ENCODE measurements at regions of chr7 and their contacts with region 1.

Region 1: GRCh38 chr7:30504347-30505173 is at the start of gene GGCT:
- DNase-seq: peak; percentile 90 to 98 (median 96)
- ATAC-seq: peak; percentile 97
- H3K4me3 ChIP-seq: peak within 1 kb of the TSS; percentile 80 to 98
- H3K4me3 Mint-ChIP-seq: peak within 1 kb of the TSS; percentile 95
- H3K27ac ChIP-seq: peak within 1 kb of the TSS; percentile 50 to 70
- H3K27ac Mint-ChIP-seq: peak within 1 kb of the TSS; percentile 94
- H3K4me1 ChIP-seq: peaks cover 23% of the 10 kb centered on the region
- H3K4me1 Mint-ChIP-seq: peaks cover 39% of the 10 kb centered on the region
- H3K27me3 ChIP-seq: no peaks in the 10 kb centered on the region
- H3K27me3 Mint-ChIP-seq: no peaks in the 10 kb centered on the region
- CTCF ChIP-seq: no peak
- total RNA-seq, gene GGCT: 5.9 to 6.1 TPM

Region 2: GRCh38 chr7:30478349-30479201 is 26.0 kb before region 1 on chr7 and contains the start of gene NOD1:
- CTCF ChIA-PET with region 1: interaction called, 10 read pairs
- POLR2A ChIA-PET with region 1: interaction called, 3 read pairs
- intact Hi-C with region 1: loop called (anchors 1 to 2 kb)
- DNase-seq: peak; percentile 13 to 81 (median 63)
- ATAC-seq: peak; percentile 81
- H3K4me3 ChIP-seq: peak within 1 kb of the TSS; percentile 68 to 80
- H3K4me3 Mint-ChIP-seq: peak within 1 kb of the TSS; percentile 95
- H3K27ac ChIP-seq: peak within 1 kb of the TSS; percentile 62 to 70
- H3K27ac Mint-ChIP-seq: peak within 1 kb of the TSS; percentile 89
- H3K4me1 ChIP-seq: peaks cover 11% of the 10 kb centered on the region
- H3K4me1 Mint-ChIP-seq: peaks cover 57% of the 10 kb centered on the region
- H3K27me3 ChIP-seq: no peaks in the 10 kb centered on the region
- H3K27me3 Mint-ChIP-seq: no peaks in the 10 kb centered on the region
- CTCF ChIP-seq: no peak
- total RNA-seq, gene NOD1: 8.4 to 11.1 TPM

Measured in CD8-positive, alpha-beta T cell (primary cell).